ENCODE measurements at regions of chr7 and their contacts with region 1.

Region 1: GRCh38 chr7:48052748-48053147 is 17.4 kb downstream of the C7orf57 start:
- DNase-seq: no peak
- H3K4me3 ChIP-seq: no peak overlapping the region
- H3K4me3 Mint-ChIP-seq: no peak overlapping the region
- H3K27ac ChIP-seq: no peak overlapping the region
- H3K27ac Mint-ChIP-seq: no peak overlapping the region
- H3K4me1 ChIP-seq: peaks cover 0 to 6% of the 10 kb centered on the region in 2 donors
- H3K4me1 Mint-ChIP-seq: peaks cover 9% of the 10 kb centered on the region
- H3K27me3 ChIP-seq: no peaks in the 10 kb centered on the region
- H3K27me3 Mint-ChIP-seq: peaks cover 2 to 8% (median 4%) of the 10 kb centered on the region in 3 donors
- CTCF ChIP-seq: no peak

Region 2: DNA sequence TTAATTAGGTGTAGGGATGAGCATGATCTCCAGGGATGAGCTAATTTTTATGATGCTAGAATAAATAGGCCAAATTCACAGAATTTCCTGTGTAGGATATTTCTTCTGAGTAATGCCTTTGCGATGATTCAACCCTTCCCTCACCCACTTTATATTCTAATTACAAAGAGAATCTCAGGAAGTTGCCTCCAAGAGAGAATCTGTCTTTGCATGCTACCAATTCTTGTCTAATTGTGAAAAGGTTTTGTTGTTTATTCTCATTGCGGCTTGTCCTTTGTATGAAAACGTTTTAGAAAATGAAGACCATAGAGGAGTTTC is 11.1 kb before region 1 on chr7:
- intact Hi-C with region 1: loop called in 1 of 2 experiments (anchors 2 kb)
- DNase-seq: no peak
- H3K4me3 ChIP-seq: no peak overlapping the region
- H3K4me3 Mint-ChIP-seq: no peak overlapping the region
- H3K27ac ChIP-seq: no peak overlapping the region
- H3K27ac Mint-ChIP-seq: no peak overlapping the region
- H3K4me1 ChIP-seq: no peaks in the 10 kb centered on the region
- H3K4me1 Mint-ChIP-seq: peaks cover 7% of the 10 kb centered on the region
- H3K27me3 ChIP-seq: peaks cover 8 to 15% of the 10 kb centered on the region in 2 donors
- H3K27me3 Mint-ChIP-seq: peaks cover 23 to 27% (median 26%) of the 10 kb centered on the region in 3 donors
- CTCF ChIP-seq: no peak

Measured in CD14-positive monocyte (primary cell).